Pancreas (tissue), 10 donors: ENCODE measurements at regions of chr16 and their contacts with region 1.

Region 1: DNA sequence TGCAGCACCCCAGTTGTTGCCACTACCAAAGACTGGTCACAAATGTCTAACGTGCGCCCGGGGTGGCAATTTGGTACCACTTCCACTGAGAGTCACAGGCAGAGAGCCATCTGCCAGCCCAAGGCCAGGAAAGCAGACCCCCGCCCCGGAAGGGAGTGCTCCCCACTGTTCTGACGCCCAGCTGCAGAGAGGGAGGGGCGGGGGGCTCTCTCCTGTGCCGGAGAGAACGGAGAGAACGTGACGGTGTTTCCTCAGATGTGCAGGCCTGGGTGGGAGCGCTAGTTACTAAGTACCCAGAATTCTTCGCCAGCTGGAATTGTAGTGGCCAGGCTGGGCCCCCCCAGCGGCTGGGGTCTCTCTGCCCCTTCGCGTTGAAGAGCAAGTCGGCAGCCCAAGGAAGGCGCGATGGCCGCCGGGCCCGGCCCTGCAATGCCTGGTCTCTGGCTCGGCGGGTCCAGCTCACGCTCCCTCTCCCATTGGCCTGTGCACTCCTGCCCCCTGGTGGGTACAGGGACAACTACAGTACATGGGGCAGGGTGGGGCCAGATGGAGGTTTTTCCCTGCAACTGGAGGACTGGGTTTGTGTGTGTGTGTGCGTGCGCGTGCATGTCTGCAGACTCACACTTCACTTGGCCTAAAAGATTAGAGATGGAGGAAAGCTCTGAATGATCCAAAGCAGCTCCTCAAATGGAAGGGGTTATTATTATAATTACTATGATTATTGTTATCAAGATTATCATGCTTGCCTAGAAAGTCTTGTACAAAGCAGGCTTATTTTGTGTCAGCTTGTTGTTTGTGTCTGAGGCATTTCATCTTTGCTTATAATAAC is 107.1 kb downstream of the AMFR start:
- DNase-seq: peak; percentile 38 to 91 (median 81)
- ATAC-seq: peak; percentile 94 to 99 (median 99)
- H3K4me3 ChIP-seq: peak overlapping the region in 1 of 4 donors; percentile 28
- H3K27ac ChIP-seq: no peak overlapping the region
- H3K4me1 ChIP-seq: no peaks in the 10 kb centered on the region
- H3K27me3 ChIP-seq: no peaks in the 10 kb centered on the region
- CTCF ChIP-seq: peak; percentile 43 to 98 (median 94)

Region 2: DNA sequence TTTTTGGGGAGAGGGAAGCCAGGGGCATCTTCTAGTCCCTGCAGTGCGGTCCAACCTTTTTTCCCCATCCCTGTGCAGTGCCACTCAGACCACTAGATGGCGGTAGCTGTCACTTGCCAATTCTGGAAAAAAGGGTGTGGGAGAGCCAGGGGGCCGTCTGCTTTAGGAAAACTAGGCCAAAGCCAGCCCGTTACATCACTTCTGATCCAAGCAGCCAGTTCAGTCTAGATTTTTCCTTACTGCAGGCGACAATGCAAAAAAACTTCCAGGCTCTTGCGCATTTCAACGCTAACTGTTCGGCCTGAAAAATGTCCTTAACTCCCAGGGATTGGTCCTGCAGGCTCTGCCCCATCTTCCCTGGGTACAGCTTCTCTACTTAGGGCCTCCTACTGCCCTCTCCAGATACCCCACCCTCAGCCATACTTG is 373.8 kb before region 1 on chr16:
- intact Hi-C with region 1: loop called in 2 of 3 experiments (anchors 5 to 10 kb)
- DNase-seq: peak in 5 of 6 donors; percentile 25 to 71 (median 58)
- ATAC-seq: peak; percentile 61 to 88 (median 87)
- H3K4me3 ChIP-seq: no peak overlapping the region
- H3K27ac ChIP-seq: no peak overlapping the region
- H3K4me1 ChIP-seq: no peaks in the 10 kb centered on the region
- H3K27me3 ChIP-seq: peaks cover 0 to 6% (median 0%) of the 10 kb centered on the region in 4 donors
- CTCF ChIP-seq: peak; percentile 88 to 97 (median 93)

Region 3: DNA sequence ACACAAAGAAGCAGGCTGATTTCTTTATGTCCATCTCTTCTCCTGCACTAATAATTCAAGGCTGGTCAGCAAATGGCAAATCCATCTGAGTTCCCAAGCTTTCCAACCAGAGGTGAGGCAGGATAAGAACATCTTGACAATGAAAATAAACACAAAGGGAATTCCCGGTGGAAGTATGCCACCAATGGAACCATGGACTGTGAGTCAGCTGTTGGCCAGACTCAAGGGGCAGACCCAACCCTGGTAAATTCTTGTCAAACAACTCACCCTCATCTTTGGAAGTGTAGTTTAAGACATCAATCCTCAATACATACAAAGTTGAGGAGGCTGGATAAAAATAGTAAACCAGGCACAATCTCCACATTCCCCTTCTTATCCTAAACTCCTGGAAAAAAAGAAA is 368.7 kb before region 1 on chr16:
- intact Hi-C with region 1: loop called in 2 of 3 experiments (anchors 5 to 10 kb)
- DNase-seq: no peak
- ATAC-seq: no peak
- H3K4me3 ChIP-seq: no peak overlapping the region
- H3K27ac ChIP-seq: no peak overlapping the region
- H3K4me1 ChIP-seq: no peaks in the 10 kb centered on the region
- H3K27me3 ChIP-seq: peaks cover 0 to 5% (median 0%) of the 10 kb centered on the region in 4 donors
- CTCF ChIP-seq: no peak

Region 4: DNA sequence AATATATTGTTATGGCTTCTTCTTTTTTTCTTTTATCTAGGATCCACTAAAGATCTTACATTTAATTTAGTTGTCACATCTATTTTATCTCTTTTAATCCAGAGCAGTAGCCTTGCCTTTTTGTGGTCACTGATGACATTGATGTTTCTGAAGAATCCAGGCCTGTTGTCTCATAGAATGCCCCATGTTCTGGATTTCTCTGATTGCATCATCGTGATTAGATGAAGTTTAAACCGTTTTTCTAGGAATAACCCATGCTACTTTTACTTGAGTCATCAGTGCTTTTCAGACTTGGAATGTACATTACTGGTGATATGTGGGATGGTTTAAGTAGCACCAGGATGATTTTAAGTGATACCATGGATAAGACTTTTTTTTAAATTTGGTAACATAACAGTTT is 336.7 kb before region 1 on chr16:
- intact Hi-C with region 1: no loop called
- DNase-seq: no peak
- ATAC-seq: no peak
- H3K4me3 ChIP-seq: no peak overlapping the region
- H3K27ac ChIP-seq: no peak overlapping the region
- H3K4me1 ChIP-seq: no peaks in the 10 kb centered on the region
- H3K27me3 ChIP-seq: peaks cover 0 to 1% (median 0%) of the 10 kb centered on the region in 4 donors
- CTCF ChIP-seq: no peak

Region 5: GRCh38 chr16:56041686-56042085 is 276.5 kb before region 1 on chr16:
- intact Hi-C with region 1: loop called in 1 of 3 experiments (anchors 5 kb)
- DNase-seq: peak in 3 of 6 donors; percentile 7 to 37 (median 37)
- ATAC-seq: peak in 3 of 4 donors; percentile 80 to 86 (median 86)
- H3K4me3 ChIP-seq: no peak overlapping the region
- H3K27ac ChIP-seq: no peak overlapping the region
- H3K4me1 ChIP-seq: no peaks in the 10 kb centered on the region
- H3K27me3 ChIP-seq: no peaks in the 10 kb centered on the region
- CTCF ChIP-seq: peak in 1 of 4 donors; percentile 21